Gastrocnemius medialis (tissue), 4 donors: ENCODE measurements at regions of chr5 and their contacts with region 1.

Region 1: GRCh38 chr5:66144074-66144833 is at the start of gene SREK1:
- DNase-seq: peak; percentile 83 to 91
- ATAC-seq: peak; percentile 90 to 91
- H3K4me3 ChIP-seq: peak within 1 kb of the TSS; percentile 84 to 92 (median 88)
- H3K27ac ChIP-seq: peak within 1 kb of the TSS; percentile 94 to 99 (median 98)
- H3K4me1 ChIP-seq: peaks cover 33 to 40% of the 10 kb centered on the region in 2 donors
- H3K27me3 ChIP-seq: no peaks in the 10 kb centered on the region
- CTCF ChIP-seq: peak in 2 of 5 experiments; percentile 38 to 52
- POLR2A ChIP-seq: peak; percentile 81 to 82
- total RNA-seq, gene SREK1: 10.4 to 61.1 (median 12.3) TPM

Region 2: GRCh38 chr5:65721720-65722574 is 422.3 kb before region 1 on chr5 and contains the starts of genes NLN and SGTB:
- in situ Hi-C with region 1: loop called in 2 of 4 experiments (anchors 10 to 25 kb)
- intact Hi-C with region 1: loop called (anchors 5 kb)
- DNase-seq: peak; percentile 74 to 79
- ATAC-seq: peak; percentile 86 to 91
- H3K4me3 ChIP-seq: peak within 1 kb of the TSS; percentile 88 to 100 (median 93)
- H3K27ac ChIP-seq: peak within 1 kb of the TSS; percentile 85 to 90 (median 88)
- H3K4me1 ChIP-seq: peaks cover 28 to 52% of the 10 kb centered on the region in 2 donors
- H3K27me3 ChIP-seq: no peaks in the 10 kb centered on the region
- CTCF ChIP-seq: no peak
- POLR2A ChIP-seq: peak; percentile 63 to 72
- total RNA-seq, gene NLN: 20.4 to 29.9 (median 27.9) TPM
- total RNA-seq, gene SGTB: 3.6 to 6.6 (median 4.3) TPM

Region 3: DNA sequence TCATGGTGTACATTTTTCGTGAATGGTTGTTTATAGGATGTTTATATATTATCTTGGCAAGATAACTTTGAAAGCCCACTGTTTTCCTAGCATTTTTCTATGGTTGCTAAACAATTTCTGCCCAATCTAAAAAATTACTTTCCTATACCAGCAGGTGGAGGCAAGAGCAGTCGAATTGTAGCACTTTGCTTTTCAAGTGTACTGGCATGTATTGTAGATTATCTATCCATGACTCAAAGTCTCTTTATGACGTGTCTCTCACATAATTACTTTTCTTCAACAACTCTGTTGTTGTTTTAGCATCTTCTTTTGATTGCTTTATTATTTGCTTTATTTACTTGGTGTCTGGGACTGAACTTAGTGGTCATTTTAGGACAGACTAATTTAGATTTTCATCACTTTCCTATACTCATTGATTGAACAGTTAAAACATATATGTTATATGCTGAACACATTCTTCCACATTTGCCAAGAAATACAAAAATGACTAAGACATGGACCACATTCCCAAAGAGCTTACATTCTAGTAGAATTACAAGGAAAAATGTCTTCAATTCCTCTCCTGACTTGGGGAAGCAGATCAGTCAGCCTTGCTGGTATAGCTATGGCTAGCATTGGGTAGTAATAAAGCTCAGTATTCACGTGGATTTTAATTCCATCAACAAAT is 401.6 kb before region 1 on chr5:
- in situ Hi-C with region 1: loop called in 1 of 4 experiments (anchors 25 kb)
- intact Hi-C with region 1: no loop called
- DNase-seq: no peak
- ATAC-seq: no peak
- H3K4me3 ChIP-seq: no peak overlapping the region
- H3K27ac ChIP-seq: no peak overlapping the region
- H3K4me1 ChIP-seq: no peaks in the 10 kb centered on the region
- H3K27me3 ChIP-seq: no peaks in the 10 kb centered on the region
- CTCF ChIP-seq: peak in 3 of 5 experiments; percentile 29 to 43 (median 30)
- POLR2A ChIP-seq: no peak

Region 4: DNA sequence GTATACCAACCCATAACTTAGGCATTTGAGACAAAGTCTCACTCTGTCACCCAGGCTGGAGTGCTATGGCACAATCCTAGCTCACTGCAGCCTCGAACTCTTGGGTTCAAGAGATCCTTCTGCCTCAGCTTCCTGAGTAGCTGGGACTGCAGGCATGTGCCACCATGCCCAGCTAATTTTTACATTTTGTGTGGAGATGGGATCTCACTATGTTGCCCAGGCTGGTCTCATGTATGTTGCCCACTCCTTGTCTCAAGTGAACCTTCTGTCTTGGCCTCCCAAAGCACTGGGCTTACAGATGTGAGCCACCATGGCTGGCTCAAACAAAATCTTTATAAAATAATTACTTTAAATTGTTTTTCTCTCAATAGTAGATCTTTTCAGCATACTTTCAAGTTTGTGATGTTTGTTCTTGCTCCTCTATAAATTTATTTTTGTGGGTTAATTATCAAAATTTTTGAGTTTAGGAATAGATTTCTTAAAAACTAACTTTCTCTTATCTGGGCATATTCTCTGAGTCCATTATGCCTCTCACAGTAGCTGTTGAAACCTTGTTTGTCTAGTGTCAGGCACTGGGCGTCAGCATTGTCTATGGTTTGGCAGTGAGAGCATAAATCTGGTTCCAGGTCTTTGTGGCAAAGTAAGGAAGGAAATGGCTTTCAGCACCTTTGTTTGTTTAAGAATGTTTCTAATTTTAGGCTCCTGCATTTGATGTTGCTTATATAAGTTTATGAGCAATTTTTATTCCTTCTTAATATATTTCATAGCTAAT is 383.6 kb before region 1 on chr5:
- in situ Hi-C with region 1: no loop called
- intact Hi-C with region 1: loop called (anchors 10 kb)
- DNase-seq: no peak
- ATAC-seq: peak in 1 of 2 donors; percentile 42
- H3K4me3 ChIP-seq: no peak overlapping the region
- H3K27ac ChIP-seq: no peak overlapping the region
- H3K4me1 ChIP-seq: peaks cover 0 to 5% of the 10 kb centered on the region in 2 donors
- H3K27me3 ChIP-seq: no peaks in the 10 kb centered on the region
- CTCF ChIP-seq: no peak
- POLR2A ChIP-seq: no peak

Region 5: DNA sequence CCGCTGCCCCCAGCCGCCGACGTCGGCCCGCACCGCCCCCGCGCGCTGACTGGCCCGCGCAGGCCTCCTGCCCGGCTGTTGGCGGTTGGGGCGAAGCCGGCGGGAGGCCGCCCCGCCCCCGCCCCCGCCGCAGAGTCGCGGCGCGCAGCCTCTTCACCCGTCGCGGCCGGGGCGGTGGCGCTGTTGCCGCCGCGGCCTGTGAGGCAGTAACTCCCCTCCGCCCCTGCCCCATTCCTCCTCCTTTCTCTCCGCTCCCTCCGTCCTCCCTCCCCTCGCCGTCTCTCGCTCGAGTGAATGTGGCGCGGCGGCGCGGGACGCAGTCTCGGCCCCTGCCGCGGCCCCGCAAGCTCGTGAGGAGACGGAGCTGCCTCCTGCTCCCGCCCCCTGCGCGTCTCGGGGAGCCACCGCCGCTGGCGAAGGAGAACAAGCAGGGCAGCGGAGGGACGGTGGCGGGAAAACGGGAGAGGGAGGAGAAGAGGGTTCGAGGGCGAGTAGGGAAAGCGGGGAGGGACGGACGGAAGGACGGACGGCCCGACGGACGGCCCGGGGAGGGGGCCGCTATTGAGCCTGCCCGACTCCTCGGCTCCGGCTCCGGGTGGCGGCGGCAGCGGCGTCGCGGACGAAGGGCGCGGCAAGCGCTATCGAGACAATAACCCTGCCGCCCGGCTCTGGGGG is 218.5 kb before region 1 on chr5:
- in situ Hi-C with region 1: loop called in 2 of 4 experiments (anchors 10 kb)
- intact Hi-C with region 1: loop called (anchors 2 kb)
- DNase-seq: peak; percentile 69 to 79
- ATAC-seq: peak; percentile 69
- H3K4me3 ChIP-seq: peak overlapping the region; percentile 85 to 95 (median 92)
- H3K27ac ChIP-seq: peak overlapping the region; percentile 97 to 100 (median 99)
- H3K4me1 ChIP-seq: peaks cover 18% of the 10 kb centered on the region in 2 donors
- H3K27me3 ChIP-seq: no peaks in the 10 kb centered on the region
- CTCF ChIP-seq: peak in 4 of 5 experiments; percentile 41 to 50 (median 44)
- POLR2A ChIP-seq: peak; percentile 93 to 95